AG04449 (cell line): ENCODE measurements at regions of chr1 and their contacts with region 1.

Region 1: GRCh38 chr1:46724991-46725735 is 6.2 kb upstream of the EFCAB14 start:
- DNase-seq: peak; percentile 41
- H3K4me3 ChIP-seq: no peak overlapping the region
- CTCF ChIP-seq: peak; percentile 87

Region 2: GRCh38 chr1:46401964-46402626 is 323.1 kb before region 1 on chr1:
- CTCF ChIA-PET with region 1: interaction called, 13 read pairs
- POLR2A ChIA-PET with region 1: no interaction called
- DNase-seq: peak; percentile 87
- H3K4me3 ChIP-seq: no peak overlapping the region
- CTCF ChIP-seq: no peak

Region 3: GRCh38 chr1:46622344-46622743 is 102.8 kb before region 1 on chr1:
- CTCF ChIA-PET with region 1: interaction called, 26 read pairs
- POLR2A ChIA-PET with region 1: no interaction called
- DNase-seq: no peak
- H3K4me3 ChIP-seq: no peak overlapping the region
- CTCF ChIP-seq: peak; percentile 47

Region 4: DNA sequence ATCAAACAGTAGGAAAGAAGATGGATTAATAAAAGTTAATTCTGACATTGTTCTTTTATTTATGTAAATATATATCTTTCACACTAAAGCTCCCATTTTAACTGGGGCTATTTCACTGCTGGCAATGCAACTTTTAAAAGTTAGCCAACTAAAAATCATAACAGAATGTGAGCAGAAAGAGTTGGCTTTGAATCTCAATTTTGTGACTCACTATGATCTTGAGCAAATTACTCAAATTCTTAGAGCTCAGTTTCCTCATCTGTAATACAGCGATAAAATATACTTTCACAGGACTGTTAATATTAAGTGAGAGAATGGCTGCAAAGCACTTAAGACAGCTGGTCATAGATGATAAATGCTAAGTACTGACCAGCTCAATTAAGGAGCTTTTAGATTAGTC is 17.0 kb before region 1 on chr1:
- CTCF ChIA-PET with region 1: interaction called, 32 read pairs
- POLR2A ChIA-PET with region 1: no interaction called
- DNase-seq: no peak
- H3K4me3 ChIP-seq: no peak overlapping the region
- CTCF ChIP-seq: no peak